ENCODE measurements at regions of chr1 and their contacts with region 1.

Region 1: GRCh38 chr1:198763298-198763714 is 124.5 kb downstream of the PTPRC start:
- DNase-seq: no peak
- ATAC-seq: peak in 1 of 8 donors; percentile 53
- H3K4me3 ChIP-seq: no peak overlapping the region
- H3K27ac ChIP-seq: no peak overlapping the region
- H3K4me1 ChIP-seq: peaks cover 0 to 13% (median 0%) of the 10 kb centered on the region in 9 donors
- H3K27me3 ChIP-seq: no peaks in the 10 kb centered on the region
- CTCF ChIP-seq: no peak

Region 2: GRCh38 chr1:199113265-199113869 is 350.1 kb after region 1 on chr1:
- intact Hi-C with region 1: loop called in 1 of 10 experiments (anchors 10 kb)
- DNase-seq: peak; percentile 29 to 33
- ATAC-seq: peak in 2 of 8 donors; percentile 33 to 42
- H3K4me3 ChIP-seq: no peak overlapping the region
- H3K27ac ChIP-seq: no peak overlapping the region
- H3K4me1 ChIP-seq: no peaks in the 10 kb centered on the region
- H3K27me3 ChIP-seq: no peaks in the 10 kb centered on the region
- CTCF ChIP-seq: peak; percentile 45 to 76 (median 65)

Region 3: GRCh38 chr1:199243423-199244061 is 480.2 kb after region 1 on chr1:
- intact Hi-C with region 1: loop called in 5 of 10 experiments (anchors 5 to 10 kb)
- DNase-seq: peak; percentile 13 to 50
- ATAC-seq: peak in 7 of 8 donors; percentile 34 to 88 (median 69)
- H3K4me3 ChIP-seq: no peak overlapping the region
- H3K27ac ChIP-seq: no peak overlapping the region
- H3K4me1 ChIP-seq: no peaks in the 10 kb centered on the region
- H3K27me3 ChIP-seq: no peaks in the 10 kb centered on the region
- CTCF ChIP-seq: peak in 8 of 9 donors; percentile 36 to 73 (median 64)

Region 4: DNA sequence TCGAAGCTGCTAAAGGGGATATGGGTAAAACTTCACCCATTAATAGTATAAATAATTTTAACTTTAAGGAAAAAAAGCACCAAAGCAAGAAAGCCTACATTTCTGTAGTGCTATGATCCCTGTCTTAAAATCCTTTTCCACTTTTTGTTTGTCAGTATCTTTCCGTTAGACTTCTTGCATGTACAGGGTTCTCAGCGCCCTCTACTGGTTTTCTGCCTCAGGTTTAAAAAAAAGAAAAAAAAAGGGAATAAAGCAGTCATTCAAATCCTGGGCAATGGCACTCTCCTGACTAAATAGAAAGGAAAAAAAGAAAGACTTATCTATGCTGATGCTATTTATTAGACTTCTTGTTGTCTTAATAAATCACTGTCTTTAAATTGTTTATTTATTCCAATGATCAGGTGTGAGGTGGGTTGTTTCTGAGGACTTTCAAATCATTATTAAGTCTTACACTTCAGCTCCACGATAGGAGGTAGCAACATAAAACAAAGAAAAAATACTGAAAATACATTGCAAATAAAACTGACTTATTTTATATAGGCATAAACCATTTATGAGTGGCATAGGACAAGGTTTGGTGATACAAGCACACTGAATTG is 788.8 kb after region 1 on chr1:
- intact Hi-C with region 1: loop called in 4 of 10 experiments (anchors 5 kb)
- DNase-seq: peak in 1 of 2 donors; percentile 37
- ATAC-seq: no peak
- H3K4me3 ChIP-seq: no peak overlapping the region
- H3K27ac ChIP-seq: no peak overlapping the region
- H3K4me1 ChIP-seq: no peaks in the 10 kb centered on the region
- H3K27me3 ChIP-seq: peaks cover 0 to 3% (median 0%) of the 10 kb centered on the region in 7 donors
- CTCF ChIP-seq: peak in 8 of 9 donors; percentile 25 to 80 (median 70)

Measured in heart right ventricle (tissue), 16 donors.